ENCODE measurements at regions of chr17 and their contacts with region 1.

Region 1: DNA sequence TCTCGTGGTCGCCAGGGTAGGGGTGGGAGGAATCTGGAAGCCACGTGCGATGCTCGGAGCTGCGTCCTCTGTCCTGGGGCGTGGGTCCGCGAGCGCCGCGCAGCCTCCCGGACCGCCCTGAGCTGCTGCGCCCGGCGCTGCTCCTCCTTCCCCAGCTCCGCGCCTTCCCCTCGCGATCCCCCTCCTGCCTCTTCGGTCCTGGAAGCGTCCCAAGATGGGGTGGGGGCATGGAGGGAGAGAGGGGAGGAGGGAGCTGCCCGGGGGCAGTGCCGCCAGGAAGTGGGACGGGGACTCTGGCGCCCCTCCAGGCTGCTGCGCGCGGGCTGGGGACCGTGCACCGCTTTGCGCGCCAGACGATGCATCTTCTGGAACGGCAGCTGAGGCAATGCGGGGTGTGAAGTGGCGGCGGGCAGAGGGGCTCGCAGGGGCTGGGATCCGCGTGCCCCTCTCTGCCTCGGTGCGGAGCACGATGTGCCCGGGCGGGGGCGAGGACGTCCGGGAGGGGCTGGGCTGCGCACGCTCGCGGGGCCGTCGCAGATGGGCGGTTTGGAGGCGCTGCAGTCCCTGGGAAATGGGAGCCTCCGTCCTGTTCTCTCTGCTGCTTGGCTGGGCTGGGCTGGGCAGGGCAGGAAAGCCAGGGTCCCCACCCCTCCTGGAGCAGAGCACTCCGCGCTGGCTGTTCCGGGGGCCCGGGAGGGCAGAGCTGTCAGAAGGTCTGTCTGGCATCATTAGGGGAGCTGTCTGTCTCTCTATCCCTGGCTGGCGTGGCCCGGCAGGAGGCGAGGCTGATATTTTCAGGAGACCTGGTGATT is 388.0 kb downstream of the SEC14L1 start:
- DNase-seq: peak; percentile 76
- ATAC-seq: peak; percentile 86
- H3K4me3 Mint-ChIP-seq: peak overlapping the region; percentile 62
- H3K27ac Mint-ChIP-seq: no peak overlapping the region
- H3K4me1 Mint-ChIP-seq: peaks cover 3% of the 10 kb centered on the region; the same call in 1 of the 2 replicates
- H3K27me3 Mint-ChIP-seq: peaks cover 50% of the 10 kb centered on the region
- CTCF ChIP-seq: no peak

Region 2: GRCh38 chr17:77372444-77373298 is 156.1 kb before region 1 on chr17:
- CTCF ChIA-PET with region 1: no interaction called
- POLR2A ChIA-PET with region 1: no interaction called
- DNase-seq: peak; percentile 88
- ATAC-seq: peak; percentile 67
- H3K4me3 Mint-ChIP-seq: peak overlapping the region; percentile 66
- H3K27ac Mint-ChIP-seq: no peak overlapping the region
- H3K4me1 Mint-ChIP-seq: peaks cover 63% of the 10 kb centered on the region
- H3K27me3 Mint-ChIP-seq: no peaks in the 10 kb centered on the region
- CTCF ChIP-seq: no peak

Region 3: GRCh38 chr17:77542551-77543490 is 14.1 kb after region 1 on chr17:
- CTCF ChIA-PET with region 1: interaction called, 11 read pairs
- POLR2A ChIA-PET with region 1: no interaction called
- DNase-seq: peak; percentile 86
- ATAC-seq: peak; percentile 84
- H3K4me3 Mint-ChIP-seq: peak overlapping the region; percentile 13; the same call in 1 of the 2 replicates
- H3K27ac Mint-ChIP-seq: no peak overlapping the region
- H3K4me1 Mint-ChIP-seq: peaks cover 49% of the 10 kb centered on the region
- H3K27me3 Mint-ChIP-seq: peaks cover 20% of the 10 kb centered on the region
- CTCF ChIP-seq: no peak; the same call in 1 of the 2 replicates

Measured in WTC11 (cell line).